Prostate gland (tissue), 2 donors: ENCODE measurements at regions of chr9 and their contacts with region 1.

Region 1: GRCh38 chr9:2132484-2133082 is 117.4 kb downstream of the SMARCA2 start:
- DNase-seq: no peak
- H3K4me3 ChIP-seq: no peak overlapping the region
- H3K27ac ChIP-seq: no peak overlapping the region
- H3K4me1 ChIP-seq: no peaks in the 10 kb centered on the region
- H3K27me3 ChIP-seq: no peaks in the 10 kb centered on the region
- CTCF ChIP-seq: peak; percentile 20 to 78 (median 54)
- POLR2A ChIP-seq: no peak

Region 2: DNA sequence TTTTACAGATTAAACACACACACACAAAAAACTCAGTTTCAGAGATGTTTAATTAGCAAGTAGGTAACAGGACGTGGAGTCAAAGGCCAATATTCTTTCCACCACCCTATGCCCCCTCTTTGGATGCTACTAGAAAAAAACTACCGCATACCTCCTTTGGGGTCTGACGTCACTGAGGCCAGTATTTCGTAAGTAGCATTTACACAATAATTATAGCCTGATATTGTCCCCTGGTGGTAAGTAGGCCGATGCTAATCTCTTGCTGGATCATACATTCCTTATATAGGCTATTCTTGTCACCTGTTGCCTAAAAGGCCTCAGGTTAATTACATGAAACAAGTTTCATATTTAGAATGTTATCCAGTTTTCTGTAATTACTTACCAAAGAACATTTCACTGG is 138.4 kb before region 1 on chr9:
- intact Hi-C with region 1: no loop called
- DNase-seq: no peak
- H3K4me3 ChIP-seq: no peak overlapping the region
- H3K27ac ChIP-seq: no peak overlapping the region
- H3K4me1 ChIP-seq: no peaks in the 10 kb centered on the region
- H3K27me3 ChIP-seq: no peaks in the 10 kb centered on the region
- CTCF ChIP-seq: no peak
- POLR2A ChIP-seq: no peak

Region 3: GRCh38 chr9:2193552-2193951 is 61.0 kb after region 1 on chr9:
- intact Hi-C with region 1: no loop called
- DNase-seq: no peak
- H3K4me3 ChIP-seq: no peak overlapping the region
- H3K27ac ChIP-seq: no peak overlapping the region
- H3K4me1 ChIP-seq: no peaks in the 10 kb centered on the region
- H3K27me3 ChIP-seq: no peaks in the 10 kb centered on the region
- CTCF ChIP-seq: no peak
- POLR2A ChIP-seq: no peak

Region 4: GRCh38 chr9:2336055-2336454 is 203.5 kb after region 1 on chr9:
- intact Hi-C with region 1: loop called (anchors 10 kb)
- DNase-seq: no peak
- H3K4me3 ChIP-seq: no peak overlapping the region
- H3K27ac ChIP-seq: no peak overlapping the region
- H3K4me1 ChIP-seq: peaks cover 3% of the 10 kb centered on the region
- H3K27me3 ChIP-seq: no peaks in the 10 kb centered on the region
- CTCF ChIP-seq: no peak
- POLR2A ChIP-seq: no peak

Region 5: GRCh38 chr9:2727966-2728613 is 595.5 kb after region 1 on chr9:
- intact Hi-C with region 1: loop called (anchors 5 kb)
- DNase-seq: peak; percentile 39
- H3K4me3 ChIP-seq: no peak overlapping the region
- H3K27ac ChIP-seq: no peak overlapping the region
- H3K4me1 ChIP-seq: no peaks in the 10 kb centered on the region
- H3K27me3 ChIP-seq: no peaks in the 10 kb centered on the region
- CTCF ChIP-seq: peak; percentile 25 to 82 (median 64)
- POLR2A ChIP-seq: no peak

Region 6: GRCh38 chr9:2837915-2838314 is 705.3 kb after region 1 on chr9:
- intact Hi-C with region 1: loop called (anchors 2 kb)
- DNase-seq: no peak
- H3K4me3 ChIP-seq: no peak overlapping the region
- H3K27ac ChIP-seq: peak overlapping the region; percentile 1 to 13
- H3K4me1 ChIP-seq: peaks cover 10% of the 10 kb centered on the region
- H3K27me3 ChIP-seq: no peaks in the 10 kb centered on the region
- CTCF ChIP-seq: peak in 2 of 4 experiments; percentile 35 to 49
- POLR2A ChIP-seq: no peak